Heart left ventricle (tissue), 16 donors: ENCODE measurements at regions of chr10 and their contacts with region 1.

Region 1: DNA sequence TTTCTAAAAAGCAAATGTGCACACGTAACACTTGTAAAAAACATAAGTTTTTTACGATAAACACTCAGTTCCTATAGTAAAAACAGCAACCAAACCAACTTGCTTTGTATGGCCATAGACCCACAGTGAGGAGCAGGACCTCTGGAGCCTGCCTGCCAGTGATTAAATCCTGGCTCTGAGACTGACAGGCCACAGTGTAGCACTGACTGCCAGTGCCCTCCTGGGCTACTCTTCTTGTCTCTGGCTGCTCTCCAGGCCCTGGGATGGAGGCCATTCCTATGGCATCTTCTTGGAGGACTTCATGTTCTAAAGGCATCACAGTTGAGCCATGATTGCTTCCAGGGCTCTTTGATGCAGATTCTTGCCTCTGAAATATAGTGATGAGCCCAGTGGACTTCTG is 22.7 kb upstream of the TMEM254 start:
- DNase-seq: peak in 2 of 5 donors; percentile 50 to 67
- ATAC-seq: peak; percentile 63 to 83 (median 76)
- H3K4me3 ChIP-seq: no peak overlapping the region
- H3K27ac ChIP-seq: no peak overlapping the region
- H3K4me1 ChIP-seq: peaks cover 0 to 2% (median 0%) of the 10 kb centered on the region in 12 donors
- H3K27me3 ChIP-seq: no peaks in the 10 kb centered on the region
- CTCF ChIP-seq: no peak
- POLR2A ChIP-seq: no peak

Region 2: GRCh38 chr10:80015911-80016830 is 39.6 kb before region 1 on chr10:
- intact Hi-C with region 1: no loop called
- DNase-seq: no peak
- ATAC-seq: no peak
- H3K4me3 ChIP-seq: no peak overlapping the region
- H3K27ac ChIP-seq: no peak overlapping the region
- H3K4me1 ChIP-seq: no peaks in the 10 kb centered on the region
- H3K27me3 ChIP-seq: no peaks in the 10 kb centered on the region
- CTCF ChIP-seq: no peak
- POLR2A ChIP-seq: no peak

Region 3: DNA sequence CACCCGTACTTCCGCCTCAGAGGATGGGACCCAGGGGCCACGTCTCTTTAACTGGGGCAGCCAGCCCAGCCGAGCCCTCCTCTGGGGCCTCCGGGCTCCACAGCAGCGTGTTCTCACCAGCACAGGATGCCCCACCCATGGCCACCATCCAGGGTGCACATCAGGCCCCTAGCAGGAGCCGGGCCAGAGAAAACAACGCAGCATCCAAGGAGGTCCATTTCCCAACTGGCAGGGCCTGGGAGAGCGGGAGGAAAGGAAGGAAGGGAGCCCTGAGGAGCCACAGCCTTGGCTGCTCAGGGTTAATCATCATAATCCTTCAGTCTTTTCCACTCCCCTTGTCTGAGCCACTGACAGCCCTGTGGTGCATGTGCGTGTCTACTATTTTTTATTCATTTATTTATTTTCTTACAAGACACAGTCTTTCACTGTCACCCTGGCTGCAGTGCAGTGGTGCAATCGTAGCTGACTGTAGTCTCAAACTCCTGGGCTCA is 80.4 kb after region 1 on chr10:
- intact Hi-C with region 1: loop called in 2 of 10 experiments (anchors 5 kb)
- DNase-seq: peak; percentile 93 to 97 (median 95)
- ATAC-seq: peak; percentile 78 to 90 (median 84)
- H3K4me3 ChIP-seq: peak overlapping the region in 5 of 12 donors; percentile 7 to 68 (median 35)
- H3K27ac ChIP-seq: peak overlapping the region; percentile 25 to 91 (median 76)
- H3K4me1 ChIP-seq: peaks cover 0 to 66% (median 30%) of the 10 kb centered on the region in 12 donors
- H3K27me3 ChIP-seq: peaks cover 0 to 19% (median 0%) of the 10 kb centered on the region in 9 donors
- CTCF ChIP-seq: no peak
- POLR2A ChIP-seq: no peak

Region 4: GRCh38 chr10:80144067-80144695 is 88.4 kb after region 1 on chr10:
- intact Hi-C with region 1: loop called in 2 of 10 experiments (anchors 5 kb)
- DNase-seq: no peak
- ATAC-seq: peak; percentile 21 to 58 (median 48)
- H3K4me3 ChIP-seq: peak overlapping the region in 4 of 12 donors; percentile 0 to 31 (median 12)
- H3K27ac ChIP-seq: peak overlapping the region in 3 of 12 donors; percentile 3 to 45 (median 37)
- H3K4me1 ChIP-seq: peaks cover 0 to 31% (median 15%) of the 10 kb centered on the region in 12 donors
- H3K27me3 ChIP-seq: no peaks in the 10 kb centered on the region
- CTCF ChIP-seq: peak in 2 of 12 donors; percentile 4
- POLR2A ChIP-seq: peak in 1 of 2 donors; percentile 12

Region 5: DNA sequence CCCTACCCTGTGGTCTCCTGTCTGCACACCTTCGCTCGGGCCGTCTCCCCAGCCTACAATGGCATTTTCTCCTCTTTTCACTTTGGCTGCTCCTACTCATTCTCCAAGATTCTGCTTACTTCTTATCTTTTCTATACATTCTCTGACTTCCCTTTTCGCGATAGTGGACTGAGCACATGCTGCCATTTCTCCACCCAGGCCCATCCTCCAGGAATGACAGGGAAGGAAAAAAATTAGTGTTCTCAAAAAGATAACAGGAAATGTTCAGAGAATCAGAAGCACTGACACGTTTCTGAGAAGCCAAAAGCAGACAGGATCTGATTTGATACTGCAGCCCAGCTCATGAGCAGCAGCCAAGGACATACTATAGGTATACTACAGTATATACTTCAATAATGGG is 156.0 kb after region 1 on chr10:
- intact Hi-C with region 1: loop called in 1 of 10 experiments (anchors 10 kb)
- DNase-seq: no peak
- ATAC-seq: no peak
- H3K4me3 ChIP-seq: no peak overlapping the region
- H3K27ac ChIP-seq: no peak overlapping the region
- H3K4me1 ChIP-seq: peaks cover 0 to 13% (median 4%) of the 10 kb centered on the region in 12 donors
- H3K27me3 ChIP-seq: no peaks in the 10 kb centered on the region
- CTCF ChIP-seq: no peak
- POLR2A ChIP-seq: no peak